Left ventricle myocardium inferior (tissue), 1 donor: ENCODE measurements at regions of chr7 and their contacts with region 1.

Region 1: DNA sequence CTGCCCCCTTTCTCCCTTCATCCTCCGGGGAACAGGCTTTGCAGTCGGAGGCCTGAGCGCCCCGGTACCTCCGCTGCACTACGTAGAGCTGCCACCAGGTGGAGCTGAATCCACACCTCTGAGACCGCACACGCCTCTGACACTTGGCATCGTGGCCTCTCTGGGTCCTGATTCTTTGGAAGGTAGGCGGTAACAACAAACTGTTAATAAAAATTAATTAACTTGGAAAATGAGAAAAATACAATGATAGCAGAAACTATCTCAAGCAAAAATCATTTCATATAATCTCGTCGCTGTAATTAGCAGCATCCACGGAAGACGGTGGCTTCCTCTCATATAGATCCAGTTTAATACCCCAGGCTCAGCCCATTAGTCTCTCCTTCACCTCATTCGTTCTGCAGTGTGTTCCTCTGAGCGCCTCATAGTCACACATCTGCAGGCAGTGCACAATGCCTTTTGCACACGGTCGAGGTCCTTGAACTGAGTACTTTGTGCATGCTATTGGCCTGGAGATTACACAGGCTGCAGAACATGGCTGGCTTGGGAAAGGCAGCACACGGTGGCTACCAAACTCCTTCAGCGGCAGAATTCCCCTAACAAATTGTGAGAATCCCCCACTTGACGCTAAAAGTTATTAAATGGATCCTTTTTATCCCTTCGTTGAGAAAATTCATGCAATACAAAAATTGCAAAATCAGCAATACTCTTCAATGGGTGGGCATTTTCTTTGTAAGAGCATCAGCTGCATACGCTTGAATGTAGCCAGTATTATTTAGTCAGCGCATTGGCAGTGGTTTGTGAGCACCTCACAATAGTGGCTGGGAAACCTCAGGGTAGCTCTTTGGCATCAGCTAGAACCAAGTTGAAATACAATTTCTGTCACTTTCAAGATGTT is 18.7 kb downstream of the OR9A2 start:
- DNase-seq: peak; percentile 81
- H3K4me3 ChIP-seq: no peak overlapping the region
- H3K27ac ChIP-seq: no peak overlapping the region
- H3K4me1 ChIP-seq: no peaks in the 10 kb centered on the region
- H3K27me3 ChIP-seq: peaks cover 12% of the 10 kb centered on the region
- CTCF ChIP-seq: peak; percentile 97

Region 2: GRCh38 chr7:142853739-142854371 is 154.4 kb before region 1 on chr7:
- intact Hi-C with region 1: loop called (anchors 10 kb)
- DNase-seq: peak; percentile 63
- H3K4me3 ChIP-seq: peak overlapping the region; percentile 75
- H3K27ac ChIP-seq: peak overlapping the region; percentile 68
- H3K4me1 ChIP-seq: peaks cover 22% of the 10 kb centered on the region
- H3K27me3 ChIP-seq: peaks cover 60% of the 10 kb centered on the region
- CTCF ChIP-seq: peak; percentile 80

Region 3: DNA sequence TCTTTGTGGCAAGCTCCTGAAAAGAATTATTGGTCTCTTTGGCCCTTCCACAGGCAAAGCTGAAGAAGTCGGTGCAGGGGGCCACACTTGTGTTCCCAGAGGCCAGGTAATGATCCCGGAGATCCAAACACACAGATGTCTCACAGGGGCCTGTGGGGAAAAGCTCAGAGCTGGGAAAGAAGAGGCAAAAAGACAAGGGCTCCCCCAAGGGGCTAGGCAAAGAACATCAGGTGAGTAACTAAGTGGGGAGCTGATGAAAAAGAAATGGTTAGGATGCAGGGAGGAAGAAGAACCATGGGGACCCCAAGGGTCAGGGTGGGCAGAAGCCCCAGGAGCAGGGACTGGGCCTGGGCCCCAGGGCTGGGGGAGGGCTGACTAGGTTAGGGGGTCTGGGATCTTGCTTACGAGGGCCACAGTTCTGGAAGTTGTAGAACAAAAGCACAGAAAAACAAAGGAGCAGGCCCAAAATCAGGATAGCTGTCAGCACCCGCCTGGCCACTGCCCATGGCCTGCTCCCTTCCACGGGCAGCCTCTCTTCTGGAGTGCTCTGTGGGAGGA is 47.2 kb before region 1 on chr7:
- intact Hi-C with region 1: no loop called
- DNase-seq: no peak
- H3K4me3 ChIP-seq: no peak overlapping the region
- H3K27ac ChIP-seq: no peak overlapping the region
- H3K4me1 ChIP-seq: no peaks in the 10 kb centered on the region
- H3K27me3 ChIP-seq: peaks cover 18% of the 10 kb centered on the region
- CTCF ChIP-seq: no peak

Region 4: GRCh38 chr7:143049362-143049761 is 41.1 kb after region 1 on chr7:
- intact Hi-C with region 1: no loop called
- DNase-seq: peak; percentile 53
- H3K4me3 ChIP-seq: no peak overlapping the region
- H3K27ac ChIP-seq: peak overlapping the region; percentile 77
- H3K4me1 ChIP-seq: peaks cover 22% of the 10 kb centered on the region
- H3K27me3 ChIP-seq: no peaks in the 10 kb centered on the region
- CTCF ChIP-seq: no peak

Region 5: GRCh38 chr7:143181349-143181748 is 173.1 kb after region 1 on chr7:
- intact Hi-C with region 1: no loop called
- DNase-seq: no peak
- H3K4me3 ChIP-seq: no peak overlapping the region
- H3K27ac ChIP-seq: no peak overlapping the region
- H3K4me1 ChIP-seq: no peaks in the 10 kb centered on the region
- H3K27me3 ChIP-seq: no peaks in the 10 kb centered on the region
- CTCF ChIP-seq: no peak

Region 6: GRCh38 chr7:143214789-143215679 is 206.8 kb after region 1 on chr7:
- intact Hi-C with region 1: loop called (anchors 2 kb)
- DNase-seq: no peak
- H3K4me3 ChIP-seq: no peak overlapping the region
- H3K27ac ChIP-seq: no peak overlapping the region
- H3K4me1 ChIP-seq: no peaks in the 10 kb centered on the region
- H3K27me3 ChIP-seq: peaks cover 4% of the 10 kb centered on the region
- CTCF ChIP-seq: peak; percentile 100